Activated CD4-positive, alpha-beta T cell treated with anti-CD3 and anti-CD28 coated beads for 36 hours (primary cell): ENCODE measurements at regions of chr7 and their contacts with region 1.

Region 1: DNA sequence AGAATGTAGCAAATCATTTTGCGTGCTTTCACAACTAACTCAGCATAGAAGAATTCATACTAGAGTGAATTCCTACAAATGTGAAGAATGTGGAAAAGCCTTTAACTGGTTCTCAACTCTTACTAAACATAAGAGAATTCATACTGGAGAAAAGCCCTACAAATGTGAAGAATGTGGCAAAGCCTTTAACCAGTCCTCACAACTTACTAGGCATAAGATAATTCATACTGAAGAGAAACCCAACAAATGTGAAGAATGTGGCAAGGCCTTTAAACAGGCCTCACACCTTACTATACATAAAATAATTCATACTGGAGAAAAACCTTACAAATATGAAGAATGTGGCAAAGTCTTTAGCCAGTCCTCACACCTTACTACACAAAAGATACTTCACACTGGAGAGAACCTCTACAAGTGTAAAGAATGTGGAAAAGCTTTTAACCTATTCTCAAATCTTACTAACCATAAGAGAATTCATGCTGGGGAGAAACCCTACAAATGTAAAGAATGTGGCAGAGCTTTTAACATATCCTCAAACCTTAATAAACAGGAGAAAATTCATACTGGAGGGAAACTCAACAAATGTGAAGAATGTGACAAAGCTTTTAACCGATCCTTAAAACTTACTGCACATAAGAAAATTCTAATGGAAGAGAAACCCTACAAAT is 40.8 kb downstream of the ZNF107 start:
- DNase-seq: no peak
- ATAC-seq: no peak
- H3K4me3 Mint-ChIP-seq: no peak overlapping the region
- H3K27ac Mint-ChIP-seq: no peak overlapping the region
- H3K4me1 Mint-ChIP-seq: no peaks in the 10 kb centered on the region
- H3K27me3 Mint-ChIP-seq: no peaks in the 10 kb centered on the region

Region 2: GRCh38 chr7:64037095-64037494 is 669.7 kb before region 1 on chr7:
- CTCF ChIA-PET with region 1: no interaction called
- POLR2A ChIA-PET with region 1: no interaction called
- intact Hi-C with region 1: no loop called
- DNase-seq: no peak
- ATAC-seq: no peak
- H3K4me3 Mint-ChIP-seq: no peak overlapping the region
- H3K27ac Mint-ChIP-seq: no peak overlapping the region
- H3K4me1 Mint-ChIP-seq: no peaks in the 10 kb centered on the region
- H3K27me3 Mint-ChIP-seq: peaks cover 3% of the 10 kb centered on the region

Region 3: DNA sequence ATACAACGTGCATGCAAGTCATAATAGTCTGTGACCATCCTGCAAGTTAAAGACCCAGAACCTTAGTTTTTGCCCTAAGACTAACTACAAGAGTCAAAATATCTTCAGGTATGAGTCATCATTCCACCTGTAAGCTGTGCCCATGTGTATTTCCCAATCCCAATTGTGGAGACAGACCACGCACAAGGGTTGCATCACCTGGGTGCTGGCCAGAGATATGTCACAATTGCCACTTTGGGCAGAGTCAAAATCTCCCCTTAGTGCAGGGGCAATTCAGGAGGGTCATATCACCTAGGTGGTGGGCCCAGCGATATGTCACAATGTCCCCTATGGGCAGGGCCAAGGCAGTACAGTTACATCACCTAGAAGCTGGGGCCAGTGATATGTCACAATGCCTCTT is 465.6 kb before region 1 on chr7:
- CTCF ChIA-PET with region 1: no interaction called
- POLR2A ChIA-PET with region 1: no interaction called
- intact Hi-C with region 1: no loop called
- DNase-seq: no peak
- ATAC-seq: no peak
- H3K4me3 Mint-ChIP-seq: no peak overlapping the region
- H3K27ac Mint-ChIP-seq: no peak overlapping the region
- H3K4me1 Mint-ChIP-seq: no peaks in the 10 kb centered on the region
- H3K27me3 Mint-ChIP-seq: no peaks in the 10 kb centered on the region

Region 4: GRCh38 chr7:64320547-64321513 is 385.9 kb before region 1 on chr7:
- CTCF ChIA-PET with region 1: no interaction called
- POLR2A ChIA-PET with region 1: no interaction called
- intact Hi-C with region 1: loop called in 1 of 2 experiments (anchors 10 kb)
- DNase-seq: no peak
- ATAC-seq: peak; percentile 42
- H3K4me3 Mint-ChIP-seq: no peak overlapping the region
- H3K27ac Mint-ChIP-seq: no peak overlapping the region
- H3K4me1 Mint-ChIP-seq: peaks cover 8% of the 10 kb centered on the region
- H3K27me3 Mint-ChIP-seq: no peaks in the 10 kb centered on the region

Region 5: GRCh38 chr7:64528770-64529169 is 178.0 kb before region 1 on chr7:
- CTCF ChIA-PET with region 1: no interaction called
- POLR2A ChIA-PET with region 1: no interaction called
- intact Hi-C with region 1: no loop called
- DNase-seq: no peak
- ATAC-seq: no peak
- H3K4me3 Mint-ChIP-seq: no peak overlapping the region
- H3K27ac Mint-ChIP-seq: no peak overlapping the region
- H3K4me1 Mint-ChIP-seq: no peaks in the 10 kb centered on the region
- H3K27me3 Mint-ChIP-seq: no peaks in the 10 kb centered on the region